Right ventricle myocardium superior (tissue), 1 donor: ENCODE measurements at regions of chr10 and their contacts with region 1.

Region 1: GRCh38 chr10:18659120-18659818 is at the start of gene ARL5B:
- DNase-seq: peak; percentile 99
- ATAC-seq: peak; percentile 99
- total RNA-seq, gene ARL5B: 5.4 TPM

Region 2: GRCh38 chr10:18340496-18341051 is 318.7 kb before region 1 on chr10:
- intact Hi-C with region 1: loop called (anchors 10 kb)
- DNase-seq: peak; percentile 52
- ATAC-seq: peak; percentile 85